ENCODE measurements at regions of chr10 and their contacts with region 1.

Region 1: GRCh38 chr10:57338823-57339558 is 928.7 kb downstream of the IPMK start:
- DNase-seq: no peak
- H3K4me3 Mint-ChIP-seq: no peak overlapping the region
- H3K27ac Mint-ChIP-seq: no peak overlapping the region
- H3K4me1 Mint-ChIP-seq: no peaks in the 10 kb centered on the region
- H3K27me3 Mint-ChIP-seq: no peaks in the 10 kb centered on the region

Region 2: GRCh38 chr10:57657164-57657765 is 318.3 kb after region 1 on chr10:
- intact Hi-C with region 1: loop called (anchors 1 kb)
- DNase-seq: peak; percentile 10
- H3K4me3 Mint-ChIP-seq: no peak overlapping the region
- H3K27ac Mint-ChIP-seq: no peak overlapping the region
- H3K4me1 Mint-ChIP-seq: no peaks in the 10 kb centered on the region
- H3K27me3 Mint-ChIP-seq: no peaks in the 10 kb centered on the region

Region 3: DNA sequence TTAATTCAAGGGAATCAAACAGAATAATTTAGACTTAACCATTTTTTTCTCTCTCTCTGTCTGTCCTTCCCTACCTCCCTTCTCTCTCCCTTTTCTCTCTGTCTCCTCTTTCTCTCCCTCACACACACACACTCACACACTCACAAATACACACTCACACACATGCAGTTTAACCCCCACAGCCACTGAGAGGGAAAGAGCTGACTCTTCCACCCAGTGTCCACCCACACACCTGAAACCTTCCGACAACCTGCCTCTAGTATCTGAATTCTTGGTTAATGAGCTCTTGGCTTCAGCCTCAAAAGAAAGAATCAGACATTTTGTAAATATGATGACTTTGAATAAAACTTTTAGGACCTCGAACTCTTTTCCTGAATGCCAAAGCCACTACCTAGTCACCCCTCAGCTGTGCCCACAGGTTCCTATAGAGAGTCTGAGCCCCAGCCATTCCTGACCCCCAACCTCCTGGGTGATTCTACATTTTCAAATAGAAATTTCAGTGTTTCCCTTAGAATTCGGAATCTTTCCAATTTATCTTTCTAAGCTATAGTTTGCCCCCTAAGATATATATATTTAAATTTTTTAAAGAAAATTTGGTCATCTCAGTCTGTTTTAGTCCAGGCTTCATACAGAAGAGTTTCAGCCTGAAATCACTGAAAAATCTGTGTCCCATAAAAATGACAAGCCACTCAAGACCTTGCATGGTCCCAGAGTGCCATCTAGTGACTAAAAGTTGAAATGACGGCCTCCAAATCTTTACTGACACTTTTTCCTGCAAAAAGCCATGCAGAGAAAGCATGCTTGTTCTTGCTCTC is 725.9 kb after region 1 on chr10:
- intact Hi-C with region 1: loop called (anchors 5 kb)
- DNase-seq: no peak
- H3K4me3 Mint-ChIP-seq: no peak overlapping the region
- H3K27ac Mint-ChIP-seq: no peak overlapping the region
- H3K4me1 Mint-ChIP-seq: peaks cover 4% of the 10 kb centered on the region
- H3K27me3 Mint-ChIP-seq: peaks cover 2% of the 10 kb centered on the region

Region 4: DNA sequence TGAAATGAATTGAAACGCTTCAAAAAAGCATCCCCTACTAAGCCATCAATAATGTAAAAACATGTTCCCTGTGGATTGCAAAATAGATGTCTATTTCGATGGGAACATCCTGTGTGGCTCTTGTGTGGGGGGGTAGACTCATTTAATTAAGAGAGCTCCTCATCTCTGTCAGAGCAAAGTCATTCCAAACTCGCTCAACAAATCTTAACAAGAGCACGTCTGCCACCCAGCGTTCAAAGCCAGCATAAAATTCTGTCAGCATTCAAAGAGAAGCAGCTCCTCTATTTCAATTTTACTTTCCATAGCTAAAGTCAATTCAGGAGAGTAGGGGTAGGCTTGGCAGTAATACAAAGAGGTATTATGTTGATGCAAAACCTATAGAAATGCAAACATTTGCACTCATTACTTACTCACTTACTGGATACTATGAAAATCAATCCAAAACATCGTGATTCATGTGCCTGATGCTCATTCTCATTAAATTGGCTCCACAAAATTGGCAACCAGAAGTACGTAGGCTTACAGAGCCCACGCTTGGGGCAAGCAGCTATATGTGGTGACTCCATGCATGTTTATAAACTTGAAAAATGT is 813.8 kb after region 1 on chr10:
- intact Hi-C with region 1: loop called (anchors 5 kb)
- DNase-seq: no peak
- H3K4me3 Mint-ChIP-seq: no peak overlapping the region
- H3K27ac Mint-ChIP-seq: no peak overlapping the region
- H3K4me1 Mint-ChIP-seq: no peaks in the 10 kb centered on the region
- H3K27me3 Mint-ChIP-seq: peaks cover 6% of the 10 kb centered on the region

Measured in activated T-helper 2 cell treated with anti-CD3 and anti-CD28 coated beads, Interferon-gamma antibody, Interleukin-2, Interleukin-4, amounts not matched to agents 10 μg/mL and 5 μg/mL and 100 μg/mL, durations not matched to agents 14 hours and 24 hours and 36 hours (primary cell).